ENCODE measurements at regions of chr6 and their contacts with region 1.

Region 1: GRCh38 chr6:78025501-78025900 is 372.7 kb downstream of the MEI4 start:
- DNase-seq: no peak

Region 2: DNA sequence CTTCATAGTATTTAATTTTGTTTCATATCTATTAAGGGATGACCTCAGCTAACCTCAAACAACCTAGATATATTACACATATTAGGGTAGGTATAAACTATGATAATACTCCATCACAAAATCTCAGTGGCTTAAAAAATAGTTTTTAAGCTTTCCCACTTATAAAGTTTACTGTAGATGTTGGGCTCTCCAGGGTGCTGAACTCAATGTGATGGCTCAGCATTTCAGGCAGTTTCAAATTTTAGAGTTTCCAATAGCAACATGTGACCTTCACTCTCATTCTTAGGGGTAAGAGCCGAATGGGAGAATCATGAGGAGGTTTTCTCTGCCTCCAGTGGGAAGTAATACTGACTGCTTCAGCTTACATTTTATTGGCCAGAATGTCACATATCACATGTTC is 15.4 kb before region 1 on chr6:
- intact Hi-C with region 1: no loop called
- DNase-seq: no peak

Region 3: GRCh38 chr6:78231002-78231401 is 205.5 kb after region 1 on chr6:
- intact Hi-C with region 1: loop called in 1 of 2 experiments (anchors 5 kb)
- DNase-seq: no peak

Region 4: GRCh38 chr6:78538002-78538401 is 512.5 kb after region 1 on chr6:
- intact Hi-C with region 1: no loop called
- DNase-seq: no peak

Region 5: DNA sequence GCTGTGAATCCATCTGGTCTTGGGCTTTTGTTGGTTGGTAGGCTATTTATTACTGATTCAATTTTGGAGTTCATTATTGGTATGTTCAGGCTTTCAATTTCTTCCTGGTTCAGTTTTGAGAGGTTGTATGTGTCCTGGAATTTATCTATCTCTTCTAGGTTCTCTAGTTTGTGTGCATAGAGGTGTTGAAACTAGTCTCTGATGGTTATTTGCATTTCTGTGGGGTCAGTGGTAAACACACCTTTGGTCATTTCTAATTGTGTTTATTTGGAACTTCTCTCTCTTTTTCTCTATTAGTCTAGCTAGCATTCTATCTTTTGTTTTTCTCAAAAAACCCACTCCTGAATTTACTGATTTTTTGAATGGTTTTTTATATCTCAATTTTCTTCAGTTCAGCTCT is 771.8 kb after region 1 on chr6:
- intact Hi-C with region 1: no loop called
- DNase-seq: no peak

Region 6: GRCh38 chr6:79544939-79545450 is 1519.5 kb after region 1 on chr6:
- intact Hi-C with region 1: no loop called
- DNase-seq: peak; percentile 89